ENCODE measurements at regions of chrX and their contacts with region 1.

Region 1: DNA sequence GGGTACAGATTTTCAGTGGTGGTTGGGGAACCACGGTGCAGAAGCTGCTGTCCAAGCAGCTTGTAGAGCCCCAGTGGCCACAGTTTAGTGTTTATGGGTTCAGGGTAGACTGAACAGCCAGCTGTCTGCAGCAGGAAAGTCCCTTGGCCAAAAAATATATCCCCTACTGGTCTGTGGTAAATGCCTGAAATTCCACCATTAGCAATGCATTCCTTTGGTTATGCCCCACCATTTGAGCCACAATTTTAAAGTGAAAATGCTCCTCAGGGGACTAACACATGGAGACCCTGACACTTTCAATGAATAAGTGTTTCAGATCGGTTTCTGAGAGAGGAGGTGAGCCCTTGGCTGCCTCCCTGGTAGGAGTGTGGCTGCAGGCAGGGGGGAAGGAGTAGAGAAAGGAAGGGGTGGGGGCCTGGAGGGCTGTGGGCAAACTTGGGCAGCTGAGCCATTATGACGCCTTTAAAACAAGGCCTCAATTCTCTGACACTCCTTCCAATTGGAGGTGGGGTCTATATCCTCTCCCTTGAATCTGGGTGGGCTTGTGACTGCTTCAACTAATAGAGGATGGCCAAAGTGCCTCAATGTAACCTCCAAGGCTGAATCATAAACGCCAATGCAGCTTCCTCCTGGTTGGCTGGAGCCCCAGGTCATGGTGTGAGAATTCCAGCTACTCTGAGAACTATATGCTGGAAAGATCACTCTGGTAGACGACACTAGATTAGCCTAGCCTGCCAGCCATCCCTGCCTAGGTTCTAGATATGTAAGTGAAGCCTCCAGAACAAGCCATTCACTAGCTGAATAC is 75.8 kb upstream of the ATP6AP2 start:
- DNase-seq: no peak

Region 2: GRCh38 chrX:38654302-38654701 is 1850.7 kb before region 1 on chrX:
- intact Hi-C with region 1: loop called in 1 of 2 experiments (anchors 10 kb)
- DNase-seq: no peak

Region 3: DNA sequence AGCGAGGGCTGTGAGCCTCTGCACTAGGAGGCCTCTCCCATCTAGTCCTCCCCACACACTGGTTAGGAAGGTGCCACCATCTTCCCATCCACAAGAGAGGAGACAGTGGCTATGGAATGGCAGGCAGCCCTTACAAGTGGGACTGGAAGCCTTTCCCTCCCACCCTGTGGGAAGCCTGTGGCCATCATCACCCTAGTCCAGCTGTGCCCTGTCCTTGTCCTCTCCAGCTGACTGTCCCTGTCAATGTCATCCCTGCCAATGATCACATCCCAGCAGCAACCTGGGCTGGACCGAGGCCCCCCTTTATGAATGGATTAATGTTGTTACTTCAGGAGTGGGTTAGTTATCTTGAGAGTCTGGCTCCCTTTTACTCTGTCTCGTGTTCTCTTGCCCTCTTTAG is 995.0 kb after region 1 on chrX:
- intact Hi-C with region 1: loop called in 1 of 2 experiments (anchors 5 kb)
- DNase-seq: peak; percentile 20